ENCODE measurements at regions of chr11 and their contacts with region 1.

Region 1: GRCh38 chr11:70111269-70112016 is 33.3 kb downstream of the ANO1 start:
- ATAC-seq: peak; percentile 49 to 90 (median 81)
- H3K4me3 ChIP-seq: no peak overlapping the region
- H3K27ac ChIP-seq: peak overlapping the region in 1 of 2 donors; percentile 68
- H3K4me1 ChIP-seq: peaks cover 39 to 41% of the 10 kb centered on the region in 2 donors

Region 2: GRCh38 chr11:68436985-68437926 is 1674.2 kb before region 1 on chr11:
- in situ Hi-C with region 1: no loop called
- ATAC-seq: peak in 7 of 8 experiments; percentile 24 to 78 (median 34)
- H3K4me3 ChIP-seq: no peak overlapping the region
- H3K27ac ChIP-seq: peak overlapping the region in 1 of 2 donors; percentile 23
- H3K4me1 ChIP-seq: peaks cover 22 to 26% of the 10 kb centered on the region in 2 donors

Region 3: GRCh38 chr11:69210310-69211035 is 901.0 kb before region 1 on chr11:
- in situ Hi-C with region 1: no loop called
- ATAC-seq: peak in 7 of 8 experiments; percentile 27 to 78 (median 66)
- H3K4me3 ChIP-seq: no peak overlapping the region
- H3K27ac ChIP-seq: no peak overlapping the region
- H3K4me1 ChIP-seq: peaks cover 14 to 26% of the 10 kb centered on the region in 2 donors

Region 4: DNA sequence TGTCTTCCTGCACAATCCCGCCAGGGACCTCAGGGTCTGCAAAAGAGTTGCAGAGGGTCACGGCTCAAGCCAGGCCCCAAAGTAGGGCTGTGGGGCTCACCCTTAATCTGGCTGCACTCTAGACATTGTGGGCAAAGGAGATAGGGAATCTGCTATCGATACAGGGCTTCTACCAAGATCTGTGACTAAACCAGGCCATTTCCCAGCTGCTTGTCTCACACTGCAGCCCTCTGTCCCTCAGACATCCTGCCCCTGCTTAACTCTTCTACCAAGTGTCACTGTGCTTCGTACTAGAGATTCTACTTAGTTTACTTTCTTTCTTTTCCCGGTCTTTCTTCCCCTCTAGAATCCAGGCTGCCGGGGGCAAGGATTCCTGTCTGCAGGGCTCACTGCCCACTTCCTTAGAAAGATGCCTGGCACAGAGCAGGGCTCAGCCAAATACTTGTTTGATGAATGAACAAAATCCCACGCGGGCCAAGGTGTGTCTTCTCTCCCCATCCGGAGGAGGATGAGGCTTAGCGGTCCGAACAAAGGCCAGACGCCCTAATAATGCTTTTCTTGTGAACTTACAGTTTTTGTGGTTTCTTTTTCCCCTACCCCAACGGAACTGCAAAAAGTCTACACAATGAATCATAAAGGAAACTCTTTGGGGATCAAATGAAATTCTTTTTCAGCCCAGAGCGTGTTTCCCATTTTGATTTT is 94.6 kb before region 1 on chr11:
- in situ Hi-C with region 1: loop called in 1 of 9 experiments (anchors 25 kb)
- ATAC-seq: no peak
- H3K4me3 ChIP-seq: no peak overlapping the region
- H3K27ac ChIP-seq: no peak overlapping the region
- H3K4me1 ChIP-seq: no peaks in the 10 kb centered on the region

Region 5: DNA sequence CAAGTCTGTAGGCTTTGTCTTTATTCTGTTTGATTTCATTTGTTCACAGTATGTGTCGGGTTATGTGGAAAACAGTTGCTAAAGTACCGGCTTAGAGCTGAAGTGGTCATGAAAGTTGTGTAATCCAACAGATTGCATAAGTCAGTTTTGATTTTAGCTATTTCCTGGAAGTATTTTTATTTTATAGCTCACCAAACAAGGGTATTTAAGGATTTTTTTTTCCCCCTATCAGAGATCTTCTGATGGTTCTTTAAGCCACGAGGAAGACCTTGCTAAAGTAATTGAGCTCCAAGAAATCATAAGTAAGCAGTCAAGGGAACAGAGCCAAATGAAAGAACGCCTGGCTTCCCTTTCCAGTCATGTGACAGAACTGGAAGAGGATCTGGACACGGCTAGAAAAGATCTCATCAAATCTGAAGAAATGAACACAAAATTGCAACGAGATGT is 214.9 kb after region 1 on chr11:
- in situ Hi-C with region 1: no loop called
- ATAC-seq: peak in 2 of 8 experiments; percentile 38 to 77
- H3K4me3 ChIP-seq: no peak overlapping the region
- H3K27ac ChIP-seq: no peak overlapping the region
- H3K4me1 ChIP-seq: peaks cover 10 to 11% of the 10 kb centered on the region in 2 donors